Caco-2 (cell line): ENCODE measurements at regions of chr3 and their contacts with region 1.

Region 1: GRCh38 chr3:72673011-72673771 is 175.1 kb downstream of the SHQ1 start:
- DNase-seq: no peak
- H3K4me3 ChIP-seq: no peak overlapping the region
- H3K4me3 Mint-ChIP-seq: no peak overlapping the region
- H3K27ac Mint-ChIP-seq: no peak overlapping the region
- H3K4me1 ChIP-seq: peaks cover under 1% of the 10 kb centered on the region; the same call in 1 of the 2 replicates
- H3K4me1 Mint-ChIP-seq: peaks cover 2% of the 10 kb centered on the region
- H3K27me3 ChIP-seq: no peaks in the 10 kb centered on the region
- H3K27me3 Mint-ChIP-seq: no peaks in the 10 kb centered on the region
- CTCF ChIP-seq: no peak

Region 2: GRCh38 chr3:72462595-72463011 is 210.6 kb before region 1 on chr3:
- CTCF ChIA-PET with region 1: no interaction called
- POLR2A ChIA-PET with region 1: no interaction called
- intact Hi-C with region 1: no loop called
- DNase-seq: peak in 1 of 2 experiments; percentile 32
- H3K4me3 ChIP-seq: no peak overlapping the region
- H3K4me3 Mint-ChIP-seq: no peak overlapping the region
- H3K27ac Mint-ChIP-seq: no peak overlapping the region
- H3K4me1 ChIP-seq: peaks cover 33% of the 10 kb centered on the region
- H3K4me1 Mint-ChIP-seq: peaks cover 22% of the 10 kb centered on the region
- H3K27me3 ChIP-seq: no peaks in the 10 kb centered on the region; the same call in 1 of the 2 replicates
- H3K27me3 Mint-ChIP-seq: peaks cover 3% of the 10 kb centered on the region
- CTCF ChIP-seq: no peak

Region 3: DNA sequence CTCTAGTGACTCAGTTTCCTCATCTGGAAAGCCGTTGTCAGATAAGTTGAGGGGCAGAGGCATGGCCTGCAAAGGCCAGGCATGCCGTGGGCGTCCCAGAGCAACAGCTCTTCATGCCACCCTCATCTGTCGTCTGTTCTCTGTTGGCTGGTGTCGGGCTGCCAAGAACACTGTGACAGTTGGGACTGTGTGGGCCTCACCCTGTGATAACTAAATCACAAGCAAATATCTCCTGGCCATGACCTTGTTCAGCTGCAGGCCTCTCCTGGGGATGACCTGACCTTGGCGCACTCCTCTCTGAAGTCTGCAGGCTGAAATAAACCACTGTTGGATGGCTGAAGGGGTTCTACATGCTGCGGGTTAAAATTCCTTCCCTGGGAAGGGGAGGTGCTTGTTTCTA is 29.2 kb after region 1 on chr3:
- CTCF ChIA-PET with region 1: interaction called, 16 read pairs
- POLR2A ChIA-PET with region 1: no interaction called
- intact Hi-C with region 1: no loop called
- DNase-seq: no peak
- H3K4me3 ChIP-seq: no peak overlapping the region
- H3K4me3 Mint-ChIP-seq: no peak overlapping the region
- H3K27ac Mint-ChIP-seq: no peak overlapping the region
- H3K4me1 ChIP-seq: peaks cover 11% of the 10 kb centered on the region
- H3K4me1 Mint-ChIP-seq: peaks cover 8% of the 10 kb centered on the region
- H3K27me3 ChIP-seq: no peaks in the 10 kb centered on the region
- H3K27me3 Mint-ChIP-seq: no peaks in the 10 kb centered on the region
- CTCF ChIP-seq: no peak